Ascending aorta (tissue), 2 donors: ENCODE measurements at regions of chr1 and their contacts with region 1.

Region 1: DNA sequence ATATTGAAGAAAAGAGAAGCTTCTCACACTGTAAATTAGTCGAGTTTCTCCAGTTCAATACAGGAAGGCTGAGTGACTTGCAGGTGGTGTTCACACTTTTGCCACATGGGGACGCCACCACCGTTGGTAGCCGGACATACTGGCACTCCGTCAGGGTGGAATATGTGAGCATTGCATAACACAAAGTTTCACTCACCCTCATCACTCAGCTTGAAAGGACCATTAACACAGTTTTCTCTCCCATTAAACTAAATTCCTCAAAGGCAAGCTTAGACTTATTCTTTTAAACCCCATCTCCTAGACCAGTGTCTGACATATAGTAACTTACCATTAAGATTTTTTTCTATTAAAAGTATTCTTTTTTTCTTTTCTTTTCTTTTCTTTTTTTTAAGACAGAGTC is 105.3 kb upstream of the SERBP1 start:
- DNase-seq: peak; percentile 33 to 90
- H3K4me3 ChIP-seq: no peak overlapping the region
- H3K27ac ChIP-seq: no peak overlapping the region
- H3K4me1 ChIP-seq: peaks cover 0 to 18% of the 10 kb centered on the region in 2 donors
- H3K27me3 ChIP-seq: no peaks in the 10 kb centered on the region
- CTCF ChIP-seq: peak; percentile 88 to 97 (median 94)

Region 2: GRCh38 chr1:67110352-67110751 is 425.1 kb before region 1 on chr1:
- intact Hi-C with region 1: no loop called
- DNase-seq: no peak
- H3K4me3 ChIP-seq: no peak overlapping the region
- H3K27ac ChIP-seq: no peak overlapping the region
- H3K4me1 ChIP-seq: no peaks in the 10 kb centered on the region
- H3K27me3 ChIP-seq: no peaks in the 10 kb centered on the region
- CTCF ChIP-seq: no peak

Region 3: DNA sequence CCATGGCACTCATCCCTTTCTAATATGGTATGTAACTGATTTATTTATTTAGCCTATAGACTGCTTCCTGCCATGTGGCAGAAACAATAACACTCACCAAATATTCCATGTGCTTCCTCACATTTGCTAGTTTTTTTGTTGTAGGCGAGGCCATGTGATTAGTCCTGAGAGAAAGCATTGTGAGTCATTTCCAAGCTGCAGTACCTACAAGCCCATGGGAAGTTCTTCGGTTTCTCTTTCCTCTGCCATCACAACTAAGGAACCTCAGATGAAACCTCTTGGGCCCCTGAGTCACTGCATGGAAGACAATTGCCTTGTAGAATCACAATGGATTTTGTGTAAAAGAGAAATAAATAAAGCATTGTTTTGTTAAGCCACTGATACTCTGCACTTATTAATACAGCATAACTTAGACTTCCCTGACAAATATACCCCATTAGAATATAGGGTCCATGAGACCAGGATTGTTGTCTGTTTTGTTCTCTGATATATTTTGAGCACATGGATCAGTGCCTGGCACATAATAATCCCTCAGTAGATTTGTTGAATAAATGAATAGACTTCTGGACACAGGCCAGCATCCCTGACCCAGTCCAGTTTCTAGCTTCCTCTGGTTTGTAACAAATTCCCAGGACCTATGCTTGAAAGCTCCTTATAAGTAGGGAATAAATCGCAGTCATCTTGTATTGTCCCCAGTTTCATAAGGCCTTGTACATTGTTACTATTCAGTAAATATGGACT is 91.2 kb after region 1 on chr1:
- intact Hi-C with region 1: loop called (anchors 5 kb)
- DNase-seq: peak in 1 of 2 donors; percentile 27
- H3K4me3 ChIP-seq: no peak overlapping the region
- H3K27ac ChIP-seq: no peak overlapping the region
- H3K4me1 ChIP-seq: peaks cover 0 to 6% of the 10 kb centered on the region in 2 donors
- H3K27me3 ChIP-seq: no peaks in the 10 kb centered on the region
- CTCF ChIP-seq: no peak

Region 4: DNA sequence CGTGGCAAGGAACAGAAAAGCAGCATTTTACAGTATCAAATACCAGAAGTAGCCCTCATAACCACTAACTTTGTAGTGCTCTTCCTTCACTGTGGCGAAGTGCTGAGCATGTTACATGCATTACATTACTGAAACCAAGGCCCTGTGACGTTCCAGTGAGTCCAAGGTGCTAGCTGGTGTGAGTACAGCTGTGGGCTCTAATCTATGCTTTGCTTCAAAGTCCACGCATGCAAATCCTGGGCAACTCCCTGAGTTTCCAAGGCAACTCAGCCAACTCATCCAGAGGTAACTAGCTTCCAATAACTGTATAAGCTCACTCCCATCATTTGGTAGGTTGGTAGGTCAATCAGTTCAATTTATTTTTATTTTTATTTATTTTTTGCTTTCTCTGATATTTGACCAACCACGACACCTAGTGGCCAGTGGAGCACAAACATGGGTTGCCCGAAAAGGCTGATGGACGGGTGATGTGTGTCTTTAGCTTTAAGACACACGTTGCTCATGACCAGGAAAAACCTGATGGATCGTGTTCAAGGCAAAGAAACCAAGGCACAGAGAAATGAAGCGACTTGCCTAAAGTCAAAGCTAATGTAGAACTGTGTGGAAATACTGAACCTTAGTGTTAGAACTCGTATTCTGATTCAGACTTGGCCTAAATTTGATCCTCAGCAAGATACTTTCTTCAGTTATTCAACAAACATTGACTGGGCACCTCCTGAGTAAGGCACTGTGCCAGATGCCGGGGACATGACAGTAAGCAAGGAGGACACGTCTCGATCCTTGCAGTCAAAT is 224.8 kb after region 1 on chr1:
- intact Hi-C with region 1: loop called (anchors 1 kb)
- DNase-seq: peak in 1 of 2 donors; percentile 84
- H3K4me3 ChIP-seq: no peak overlapping the region
- H3K27ac ChIP-seq: peak overlapping the region; percentile 78 to 82
- H3K4me1 ChIP-seq: peaks cover 6 to 38% of the 10 kb centered on the region in 2 donors
- H3K27me3 ChIP-seq: no peaks in the 10 kb centered on the region
- CTCF ChIP-seq: peak; percentile 73 to 83 (median 81)

Region 5: DNA sequence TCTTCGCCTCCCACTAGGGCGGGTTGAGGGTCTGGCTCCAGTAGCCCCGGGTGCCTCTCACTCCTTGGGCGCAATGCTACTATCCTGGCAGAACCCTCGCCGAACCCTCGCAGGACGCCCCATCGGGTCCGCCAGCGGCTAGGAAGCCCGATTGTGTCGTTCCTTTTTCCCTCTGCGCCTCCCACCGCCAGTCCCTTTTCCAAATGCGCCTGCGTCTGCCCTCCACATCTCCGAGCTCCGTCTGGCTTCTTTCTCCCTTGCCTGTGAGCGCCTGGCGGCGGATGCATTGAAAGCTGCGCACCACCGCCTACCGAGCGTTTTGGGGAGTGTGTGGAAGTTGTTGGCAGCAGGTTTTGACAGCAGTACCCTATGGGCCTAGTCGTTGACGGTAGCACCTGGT is 516.0 kb after region 1 on chr1:
- intact Hi-C with region 1: loop called (anchors 2 kb)
- DNase-seq: no peak
- H3K4me3 ChIP-seq: peak overlapping the region; percentile 50 to 64
- H3K27ac ChIP-seq: no peak overlapping the region
- H3K4me1 ChIP-seq: no peaks in the 10 kb centered on the region
- H3K27me3 ChIP-seq: no peaks in the 10 kb centered on the region
- CTCF ChIP-seq: peak; percentile 30 to 53 (median 45)

Region 6: DNA sequence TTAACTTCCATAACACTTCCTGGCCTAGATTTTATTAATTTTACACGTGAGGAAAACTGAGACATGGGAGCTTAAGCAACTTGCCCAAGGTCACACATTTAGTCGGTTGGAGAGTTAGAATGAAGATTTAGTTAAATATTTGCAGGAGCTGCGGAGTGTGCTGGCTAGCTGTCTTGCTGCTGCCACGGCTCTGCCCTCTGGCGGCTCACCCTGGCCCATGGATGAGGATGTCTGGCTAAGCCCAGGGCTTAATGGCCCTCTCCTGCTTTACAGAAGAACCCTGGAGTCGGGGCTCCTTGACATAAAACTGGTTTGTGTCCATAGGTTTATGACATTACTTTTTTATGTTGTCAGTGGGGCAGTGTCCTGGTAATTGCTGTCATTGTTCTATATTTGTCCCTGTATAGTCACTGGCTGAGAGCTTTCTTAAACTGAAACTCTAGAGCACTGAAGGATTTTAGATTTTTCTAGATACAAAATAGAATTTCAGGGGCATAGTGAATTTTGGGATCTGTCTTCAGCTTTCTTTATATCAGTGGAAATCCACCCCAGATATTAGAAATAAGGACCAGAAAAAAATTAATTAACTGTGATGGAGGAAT is 785.7 kb after region 1 on chr1:
- intact Hi-C with region 1: loop called (anchors 10 kb)
- DNase-seq: peak in 1 of 2 donors; percentile 79
- H3K4me3 ChIP-seq: no peak overlapping the region
- H3K27ac ChIP-seq: no peak overlapping the region
- H3K4me1 ChIP-seq: peaks cover 0 to 2% of the 10 kb centered on the region in 2 donors
- H3K27me3 ChIP-seq: no peaks in the 10 kb centered on the region
- CTCF ChIP-seq: peak; percentile 36 to 70 (median 51)